Dorsolateral prefrontal cortex (tissue), 120 donors: ENCODE measurements at regions of chr12 and their contacts with region 1.

Region 1: DNA sequence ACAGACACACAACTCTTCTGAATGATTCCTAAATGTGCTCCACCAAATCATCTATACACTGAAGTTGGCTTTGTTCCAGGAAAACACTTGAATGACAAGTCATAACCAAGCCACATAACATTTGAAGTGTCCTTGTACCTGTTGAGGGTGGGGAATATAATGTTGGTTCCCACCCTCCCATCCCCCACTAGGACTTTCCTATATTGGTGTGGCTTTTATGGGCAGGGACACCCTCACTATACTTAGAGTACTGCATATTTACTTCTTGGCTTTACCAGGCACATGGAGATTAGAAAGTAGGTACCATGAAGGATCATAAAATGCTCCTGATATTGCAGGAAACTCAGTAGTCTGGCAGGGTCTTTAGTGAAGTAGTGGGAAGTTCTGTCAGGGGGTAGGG is 9.7 kb upstream of the BHLHE41 start:
- DNase-seq: no peak
- H3K4me3 ChIP-seq: no peak overlapping the region
- H3K27ac ChIP-seq: peak overlapping the region in 1 of 59 donors; percentile 53
- H3K27me3 ChIP-seq: no peaks in the 10 kb centered on the region
- CTCF ChIP-seq: no peak

Region 2: DNA sequence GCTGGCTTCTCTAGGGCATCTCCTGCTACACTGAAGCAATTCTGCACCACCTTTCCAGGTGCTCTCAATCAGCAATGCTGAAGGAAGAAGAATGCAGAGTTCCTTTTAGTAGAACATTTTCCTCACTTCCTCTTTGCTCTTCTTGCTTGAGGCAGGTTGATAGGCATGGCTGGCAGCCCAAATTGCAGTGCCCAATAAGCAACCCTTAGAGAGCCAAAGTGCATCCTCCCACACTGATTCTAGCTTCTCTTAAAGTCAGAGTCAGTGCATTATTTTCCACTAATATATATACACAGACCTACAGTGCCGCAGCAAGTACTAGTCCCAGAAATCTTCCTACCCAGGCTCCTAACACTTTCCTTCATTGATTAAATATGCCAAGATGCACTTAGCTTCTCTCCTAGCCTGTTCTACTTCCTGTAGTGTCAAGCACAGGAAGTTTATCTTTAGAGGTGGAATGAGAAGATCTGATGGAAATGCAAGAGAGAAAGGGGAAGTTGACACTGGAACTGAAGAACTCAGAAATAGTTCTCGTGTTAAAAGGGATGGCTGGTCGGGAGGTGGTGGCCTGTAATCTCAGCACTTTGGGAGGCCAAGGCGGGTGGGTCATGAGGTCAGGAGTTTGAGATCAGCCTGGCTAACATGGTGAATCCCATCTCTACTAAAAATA is 193.6 kb after region 1 on chr12:
- intact Hi-C with region 1: loop called in 1 of 2 experiments (anchors 1 kb)
- DNase-seq: no peak
- H3K4me3 ChIP-seq: no peak overlapping the region
- H3K27ac ChIP-seq: peak overlapping the region in 13 of 59 donors; percentile 1 to 46 (median 24)
- H3K27me3 ChIP-seq: no peaks in the 10 kb centered on the region
- CTCF ChIP-seq: no peak